ENCODE measurements at regions of chr9 and their contacts with region 1.

Region 1: DNA sequence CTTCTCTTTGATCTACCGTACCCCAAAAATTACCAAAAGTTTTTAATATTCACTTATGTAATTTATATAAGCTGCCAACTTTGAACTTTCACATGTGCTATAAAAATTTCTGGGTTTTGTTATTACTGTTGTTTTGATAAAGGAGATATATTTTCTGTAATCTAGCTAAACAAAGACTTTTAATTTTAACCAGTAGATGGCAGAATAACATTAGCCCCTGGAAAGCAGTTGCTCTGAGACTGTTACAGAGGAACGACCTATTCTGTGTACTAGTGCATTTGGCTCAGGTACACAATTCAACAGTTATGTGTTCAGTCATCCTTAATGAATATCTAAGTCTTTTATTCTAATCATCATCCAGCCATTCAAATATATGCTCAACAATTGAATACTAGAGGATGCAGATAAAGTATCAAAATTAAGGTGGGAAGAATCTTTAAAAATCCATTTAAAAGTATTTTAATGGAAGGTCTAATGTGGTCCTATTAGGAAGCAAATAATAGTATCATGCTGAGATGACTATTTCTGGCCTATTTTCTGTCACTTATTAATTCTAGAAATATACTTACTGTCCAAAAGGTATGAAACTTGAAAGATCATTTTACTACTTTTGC is 8.6 kb downstream of the KLHL9 start:
- DNase-seq: no peak
- ATAC-seq: peak; percentile 33
- H3K4me3 ChIP-seq: no peak overlapping the region
- H3K27ac ChIP-seq: no peak overlapping the region
- H3K4me1 ChIP-seq: peaks cover 27% of the 10 kb centered on the region
- H3K27me3 ChIP-seq: no peaks in the 10 kb centered on the region
- CTCF ChIP-seq: peak; percentile 43 to 64 (median 54)
- POLR2A ChIP-seq: no peak

Region 2: DNA sequence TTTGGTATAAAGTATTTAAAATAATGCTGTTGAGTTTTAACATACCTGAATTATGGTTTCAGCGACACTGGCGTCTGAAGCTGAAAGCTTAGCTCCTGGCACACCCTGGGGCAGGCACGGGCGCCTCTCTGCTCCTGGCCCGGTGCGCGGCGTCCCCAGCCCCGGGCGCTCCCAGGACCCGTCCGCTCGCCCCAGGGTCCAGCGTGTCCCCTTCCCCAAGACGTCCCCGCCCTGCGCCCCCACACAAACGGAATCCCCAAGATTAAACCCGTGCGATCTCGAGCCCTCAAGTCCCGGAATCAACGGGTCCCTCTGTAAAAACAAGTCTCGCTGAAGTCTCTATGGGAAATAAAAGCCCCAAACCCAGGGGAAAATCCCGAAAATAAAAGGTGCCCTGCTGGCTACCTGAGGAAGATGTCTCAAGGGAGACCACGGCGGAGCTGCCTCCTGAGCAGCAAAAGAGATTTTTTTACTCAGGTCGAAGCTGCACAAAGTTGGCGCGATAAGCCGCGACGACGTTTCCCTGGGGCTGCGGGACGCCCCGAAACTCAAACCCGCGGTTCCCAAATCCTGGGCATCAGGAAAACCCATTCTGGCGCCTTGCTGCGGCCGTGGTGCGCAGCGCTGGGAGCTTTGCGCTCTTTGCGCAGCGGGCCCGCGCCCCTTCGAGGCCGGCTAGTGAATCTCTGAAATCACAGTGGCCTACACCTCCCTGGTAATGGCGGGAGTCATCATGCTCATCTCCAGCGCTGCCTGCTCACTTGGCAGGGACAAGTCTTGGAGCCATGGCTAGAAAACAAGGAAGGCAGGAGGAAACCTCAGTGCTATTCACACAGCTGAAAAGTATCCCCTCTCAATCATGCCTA is 76.0 kb after region 1 on chr9:
- intact Hi-C with region 1: loop called (anchors 10 kb)
- DNase-seq: no peak
- ATAC-seq: no peak
- H3K4me3 ChIP-seq: no peak overlapping the region
- H3K27ac ChIP-seq: no peak overlapping the region
- H3K4me1 ChIP-seq: peaks cover 11% of the 10 kb centered on the region
- H3K27me3 ChIP-seq: no peaks in the 10 kb centered on the region
- CTCF ChIP-seq: no peak
- POLR2A ChIP-seq: no peak

Region 3: GRCh38 chr9:21507485-21507795 is 180.8 kb after region 1 on chr9:
- intact Hi-C with region 1: no loop called
- DNase-seq: no peak
- ATAC-seq: no peak
- H3K4me3 ChIP-seq: no peak overlapping the region
- H3K27ac ChIP-seq: no peak overlapping the region
- H3K4me1 ChIP-seq: no peaks in the 10 kb centered on the region
- H3K27me3 ChIP-seq: no peaks in the 10 kb centered on the region
- CTCF ChIP-seq: no peak
- POLR2A ChIP-seq: no peak

Region 4: GRCh38 chr9:21789541-21790037 is 463.0 kb after region 1 on chr9:
- intact Hi-C with region 1: loop called (anchors 10 kb)
- DNase-seq: peak; percentile 58 to 86 (median 70)
- ATAC-seq: peak; percentile 97
- H3K4me3 ChIP-seq: no peak overlapping the region
- H3K27ac ChIP-seq: no peak overlapping the region
- H3K4me1 ChIP-seq: no peaks in the 10 kb centered on the region
- H3K27me3 ChIP-seq: no peaks in the 10 kb centered on the region
- CTCF ChIP-seq: peak; percentile 64 to 89 (median 80)
- POLR2A ChIP-seq: no peak

Measured in body of pancreas (tissue), 4 donors.